ENCODE measurements at regions of chr2 and their contacts with region 1.

Region 1: DNA sequence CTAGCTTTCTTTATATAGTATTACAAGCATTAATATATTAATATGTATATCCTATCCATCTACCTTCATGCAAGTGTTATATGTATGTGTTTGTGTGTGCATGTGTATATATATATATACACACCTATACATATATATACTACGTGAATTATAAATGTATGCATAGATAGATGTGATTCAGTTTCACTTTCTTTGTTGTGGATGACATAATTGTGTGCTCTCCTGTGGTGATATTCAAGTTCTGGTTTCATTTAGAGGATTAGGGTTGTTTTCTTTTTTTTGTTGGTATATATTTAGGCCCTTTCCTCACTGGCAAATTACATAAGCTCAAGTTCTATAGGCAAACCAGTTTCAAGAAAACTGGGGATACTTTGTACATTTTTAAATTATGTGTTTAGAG is 225.7 kb upstream of the FANCL start:
- DNase-seq: no peak
- H3K4me3 ChIP-seq: no peak overlapping the region
- H3K27ac ChIP-seq: no peak overlapping the region
- H3K4me1 ChIP-seq: no peaks in the 10 kb centered on the region
- H3K27me3 ChIP-seq: peaks cover 2% of the 10 kb centered on the region
- CTCF ChIP-seq: no peak

Region 2: DNA sequence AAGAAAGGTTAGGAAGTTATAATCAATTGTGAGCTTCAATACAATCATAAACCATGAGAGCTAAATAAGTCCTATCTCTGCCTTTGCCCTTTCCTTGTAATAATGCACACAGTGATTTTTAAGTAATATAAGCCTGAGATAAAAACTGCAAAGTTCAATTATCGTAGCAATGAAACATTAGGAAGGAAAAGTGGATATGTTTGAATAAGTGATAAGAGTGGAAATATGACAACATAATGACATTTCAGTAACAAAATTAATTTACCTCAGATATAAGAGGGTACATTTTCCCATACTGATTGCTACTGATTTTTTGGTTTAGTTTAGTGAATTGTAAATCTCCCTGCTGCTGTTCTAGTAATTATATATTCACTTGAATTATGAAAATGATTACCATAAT is 61.5 kb before region 1 on chr2:
- CTCF ChIA-PET with region 1: interaction called, 14 read pairs
- dilution Hi-C with region 1: no loop called
- in situ Hi-C with region 1: no loop called
- intact Hi-C with region 1: no loop called
- DNase-seq: no peak
- H3K4me3 ChIP-seq: no peak overlapping the region
- H3K27ac ChIP-seq: no peak overlapping the region
- H3K4me1 ChIP-seq: no peaks in the 10 kb centered on the region
- H3K27me3 ChIP-seq: peaks cover 1% of the 10 kb centered on the region
- CTCF ChIP-seq: no peak

Measured in mammary epithelial cell (primary cell).